WTC11 (cell line): ENCODE measurements at regions of chr2 and their contacts with region 1.

Region 1: DNA sequence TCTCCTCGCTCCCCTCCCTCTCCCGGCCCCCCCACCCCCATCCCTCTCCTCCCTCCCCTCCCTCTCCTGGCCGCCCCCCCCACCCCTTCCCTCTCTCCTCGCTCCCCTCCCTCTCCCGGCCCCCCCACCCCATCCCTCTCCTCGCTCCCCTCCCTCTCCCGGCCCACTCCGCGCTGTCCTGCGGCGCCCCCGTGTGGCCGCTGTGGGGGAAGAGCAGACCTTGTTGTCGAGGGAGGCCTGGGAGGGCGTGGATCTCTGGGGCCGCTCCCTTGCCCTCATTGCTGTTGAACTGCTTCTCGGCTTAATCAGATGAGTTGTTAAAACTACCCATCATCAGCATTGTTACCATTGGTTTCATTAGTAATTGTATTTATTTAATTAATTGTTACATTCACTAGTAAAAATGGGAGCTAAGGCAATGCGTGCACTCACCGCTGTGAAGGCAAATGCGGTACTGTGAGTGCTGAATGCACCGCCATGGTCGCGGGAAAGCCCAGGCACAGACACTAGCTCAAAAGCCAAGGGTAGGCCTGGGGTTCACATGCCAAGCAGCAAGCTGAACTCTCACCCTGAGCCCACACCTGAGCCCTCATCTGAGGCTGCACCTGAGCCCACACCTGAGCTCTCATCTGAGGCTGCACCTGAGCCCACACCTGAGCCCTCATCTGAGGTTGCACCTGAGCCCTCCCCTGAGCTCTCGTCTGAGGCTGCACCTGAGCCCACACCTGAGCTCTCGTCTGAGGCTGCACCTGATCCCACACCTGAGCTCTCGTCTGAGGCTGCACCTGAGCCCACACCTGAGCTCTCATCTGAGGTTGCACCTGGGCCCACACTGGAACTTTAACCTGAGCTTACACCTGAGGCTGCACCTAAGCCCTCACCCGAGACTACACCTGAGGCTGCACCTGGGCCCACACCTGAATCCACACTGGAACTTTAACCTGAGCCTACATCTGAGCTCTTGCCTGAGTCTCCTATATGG is 8.8 kb downstream of the RTP5 start:
- DNase-seq: peak; percentile 81
- ATAC-seq: peak; percentile 17; the same call in 1 of the 2 replicates
- H3K4me3 Mint-ChIP-seq: peak overlapping the region; percentile 25
- H3K27ac Mint-ChIP-seq: no peak overlapping the region
- H3K4me1 Mint-ChIP-seq: peaks cover 21% of the 10 kb centered on the region
- H3K27me3 Mint-ChIP-seq: peaks cover 6% of the 10 kb centered on the region
- CTCF ChIP-seq: peak; percentile 57

Region 2: GRCh38 chr2:241702132-241703031 is 175.9 kb before region 1 on chr2:
- CTCF ChIA-PET with region 1: interaction called, 17 read pairs
- POLR2A ChIA-PET with region 1: interaction called, 3 read pairs
- DNase-seq: peak; percentile 92
- ATAC-seq: peak; percentile 73
- H3K4me3 Mint-ChIP-seq: peak overlapping the region; percentile 83
- H3K27ac Mint-ChIP-seq: peak overlapping the region; percentile 22; the same call in 1 of the 2 replicates
- H3K4me1 Mint-ChIP-seq: peaks cover 12% of the 10 kb centered on the region
- H3K27me3 Mint-ChIP-seq: no peaks in the 10 kb centered on the region
- CTCF ChIP-seq: no peak

Region 3: DNA sequence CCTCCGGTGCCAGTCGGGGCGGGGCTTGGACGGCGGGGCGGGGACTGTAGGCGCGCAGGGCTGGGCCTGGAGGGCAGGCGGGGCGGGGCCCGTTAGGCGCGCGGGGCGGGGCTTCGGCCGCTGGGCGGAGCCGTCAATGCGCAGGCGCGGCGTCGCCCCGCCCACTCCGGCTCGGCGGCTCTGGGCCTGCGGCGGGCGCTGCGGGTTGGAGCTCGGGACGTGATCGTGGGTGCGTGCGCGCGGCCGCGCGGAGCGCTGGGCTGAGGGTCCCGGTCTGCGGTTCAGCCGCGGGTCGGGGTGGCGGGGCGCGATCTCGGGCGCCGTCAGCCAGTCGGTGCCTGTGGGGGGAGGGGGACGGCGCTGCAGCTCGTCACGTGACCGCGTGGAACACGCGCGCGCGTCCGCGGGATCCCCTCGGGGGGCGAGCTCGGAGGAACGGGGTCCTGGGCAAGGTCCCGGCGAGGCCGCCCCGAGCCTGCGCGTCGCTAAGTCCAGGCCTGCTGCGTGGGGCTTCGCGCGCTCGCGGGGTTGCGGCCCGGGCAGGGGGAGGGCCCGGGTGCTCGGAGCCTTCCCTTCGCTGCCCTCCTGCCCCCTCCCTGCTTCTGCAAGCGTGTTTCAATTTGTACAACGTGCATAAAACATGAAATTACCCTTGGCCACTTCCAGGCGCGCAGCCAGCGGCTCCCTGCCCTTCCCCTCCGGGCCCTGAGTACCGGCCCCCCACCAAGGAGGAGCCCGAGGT is 143.6 kb before region 1 on chr2 and contains the start of gene D2HGDH:
- CTCF ChIA-PET with region 1: interaction called, 13 read pairs
- POLR2A ChIA-PET with region 1: no interaction called
- DNase-seq: peak; percentile 96
- ATAC-seq: peak; percentile 96
- H3K4me3 Mint-ChIP-seq: peak within 1 kb of the TSS; percentile 79
- H3K27ac Mint-ChIP-seq: no peak within 1 kb of the TSS
- H3K4me1 Mint-ChIP-seq: no peaks in the 10 kb centered on the region
- H3K27me3 Mint-ChIP-seq: peaks cover 14% of the 10 kb centered on the region
- CTCF ChIP-seq: no peak
- total RNA-seq, gene D2HGDH: 22.7 to 28.1 TPM (median 26.8 TPM) in 3 replicates

Region 4: GRCh38 chr2:241764275-241765241 is 113.7 kb before region 1 on chr2:
- CTCF ChIA-PET with region 1: interaction called, 12 read pairs
- POLR2A ChIA-PET with region 1: no interaction called
- DNase-seq: peak; percentile 27
- ATAC-seq: peak; percentile 69
- H3K4me3 Mint-ChIP-seq: no peak overlapping the region
- H3K27ac Mint-ChIP-seq: no peak overlapping the region; the same call in 1 of the 2 replicates
- H3K4me1 Mint-ChIP-seq: peaks cover 5% of the 10 kb centered on the region; the same call in 1 of the 2 replicates
- H3K27me3 Mint-ChIP-seq: peaks cover 3% of the 10 kb centered on the region; the same call in 1 of the 2 replicates
- CTCF ChIP-seq: no peak

Region 5: GRCh38 chr2:241853651-241854341 is 24.5 kb before region 1 on chr2:
- CTCF ChIA-PET with region 1: no interaction called
- POLR2A ChIA-PET with region 1: no interaction called
- DNase-seq: no peak
- ATAC-seq: no peak
- H3K4me3 Mint-ChIP-seq: no peak overlapping the region
- H3K27ac Mint-ChIP-seq: no peak overlapping the region
- H3K4me1 Mint-ChIP-seq: no peaks in the 10 kb centered on the region
- H3K27me3 Mint-ChIP-seq: no peaks in the 10 kb centered on the region
- CTCF ChIP-seq: no peak